ENCODE measurements at regions of chr10 and their contacts with region 1.

Region 1: DNA sequence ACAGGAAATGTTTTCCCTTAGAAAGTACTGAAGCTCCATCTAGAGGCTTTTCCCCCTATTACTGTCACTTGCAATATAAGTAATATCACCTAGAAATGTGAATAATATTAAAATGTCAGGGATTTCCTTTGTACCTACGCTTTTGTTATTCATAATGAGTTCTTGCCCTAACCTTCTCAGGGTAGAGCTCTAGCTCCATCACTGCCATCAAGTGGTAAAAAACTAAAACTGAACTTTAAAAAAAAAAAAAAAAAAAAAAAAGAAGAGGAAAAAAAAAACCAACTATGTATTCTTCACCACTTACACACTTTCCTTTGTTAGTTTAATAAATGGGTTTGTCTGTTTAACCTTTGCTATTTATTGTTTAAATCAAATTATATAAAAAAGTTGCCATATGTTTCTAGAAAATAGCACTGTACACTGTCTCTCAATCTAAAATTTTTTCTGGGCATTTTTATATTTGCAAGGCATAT is 49.9 kb downstream of the DNAJC1 start:
- DNase-seq: peak; percentile 64
- H3K4me3 ChIP-seq: no peak overlapping the region
- H3K27ac ChIP-seq: no peak overlapping the region
- H3K4me1 ChIP-seq: no peaks in the 10 kb centered on the region
- H3K27me3 ChIP-seq: no peaks in the 10 kb centered on the region
- CTCF ChIP-seq: peak; percentile 38 to 61

Region 2: DNA sequence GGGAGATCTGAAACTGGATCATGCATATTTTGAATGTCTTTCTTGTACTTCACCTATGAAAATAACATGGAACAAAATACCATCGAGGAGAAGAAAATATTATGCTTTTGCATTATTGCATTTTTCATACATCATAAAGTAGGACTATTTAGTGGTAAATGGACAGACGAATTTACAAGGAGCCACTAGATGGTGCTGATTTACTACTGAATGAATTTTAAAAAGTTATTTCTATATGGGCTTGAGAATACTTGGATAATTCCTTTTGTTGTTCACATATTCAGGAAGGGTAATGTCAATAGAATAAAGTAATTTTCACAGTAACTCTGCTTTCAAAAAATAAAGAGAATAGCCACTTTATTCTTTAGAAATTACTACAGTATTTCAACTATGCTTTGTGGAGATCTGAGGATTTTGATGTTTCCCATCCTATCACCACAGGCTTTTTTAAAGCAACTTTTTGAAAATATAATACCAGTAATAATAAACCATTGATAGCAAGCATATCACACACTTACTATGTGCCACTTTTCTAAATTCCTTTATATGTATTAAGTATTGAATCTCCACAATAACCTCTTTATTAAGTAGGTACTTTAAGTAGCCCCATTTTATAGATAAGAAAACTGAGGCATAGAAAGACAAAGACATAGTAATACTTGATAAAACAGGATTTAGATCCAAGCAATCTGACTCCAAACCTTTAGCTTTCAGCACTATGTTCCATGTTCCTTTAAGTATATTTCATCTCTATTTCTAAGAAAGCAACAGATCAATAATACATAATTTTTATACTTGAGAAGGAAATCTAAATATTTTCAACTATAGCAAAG is 1095.1 kb before region 1 on chr10:
- CTCF ChIA-PET with region 1: no interaction called
- dilution Hi-C with region 1: no loop called
- in situ Hi-C with region 1: no loop called
- intact Hi-C with region 1: loop called (anchors 10 kb)
- DNase-seq: peak; percentile 25
- H3K4me3 ChIP-seq: no peak overlapping the region
- H3K27ac ChIP-seq: no peak overlapping the region
- H3K4me1 ChIP-seq: no peaks in the 10 kb centered on the region
- H3K27me3 ChIP-seq: no peaks in the 10 kb centered on the region
- CTCF ChIP-seq: peak; percentile 38 to 54

Region 3: DNA sequence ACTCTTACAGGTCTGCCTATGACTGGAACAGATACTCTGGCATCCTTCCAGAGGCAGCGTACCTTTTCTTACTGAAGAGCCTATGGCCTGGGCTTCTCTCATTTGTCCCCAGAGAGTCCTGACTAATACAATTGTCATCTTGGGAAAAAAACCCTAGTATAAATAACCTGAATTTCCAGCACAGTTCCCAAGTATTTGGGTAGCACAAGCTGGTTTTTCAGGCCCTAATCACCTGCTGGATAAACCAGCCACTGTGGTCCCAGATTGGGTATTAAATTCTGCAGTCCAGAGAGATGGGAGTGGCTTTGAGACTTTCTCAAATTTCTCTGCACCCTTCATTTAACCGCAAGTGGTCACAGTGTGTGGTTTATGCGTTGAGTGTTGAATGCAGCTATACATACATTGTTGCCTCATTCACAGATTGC is 869.7 kb before region 1 on chr10:
- CTCF ChIA-PET with region 1: interaction called, 35 read pairs
- dilution Hi-C with region 1: no loop called
- in situ Hi-C with region 1: no loop called
- intact Hi-C with region 1: loop called (anchors 5 kb)
- DNase-seq: peak; percentile 82
- H3K4me3 ChIP-seq: no peak overlapping the region
- H3K27ac ChIP-seq: no peak overlapping the region
- H3K4me1 ChIP-seq: no peaks in the 10 kb centered on the region
- H3K27me3 ChIP-seq: no peaks in the 10 kb centered on the region
- CTCF ChIP-seq: no peak

Region 4: GRCh38 chr10:21516242-21517131 is 437.1 kb before region 1 on chr10:
- CTCF ChIA-PET with region 1: no interaction called
- dilution Hi-C with region 1: no loop called
- in situ Hi-C with region 1: loop called in 1 of 2 experiments (anchors 25 kb)
- intact Hi-C with region 1: loop called (anchors 5 kb)
- DNase-seq: peak; percentile 56
- H3K4me3 ChIP-seq: peak overlapping the region; percentile 44 to 68 (median 67)
- H3K27ac ChIP-seq: no peak overlapping the region
- H3K4me1 ChIP-seq: peaks cover 18% of the 10 kb centered on the region
- H3K27me3 ChIP-seq: no peaks in the 10 kb centered on the region
- CTCF ChIP-seq: no peak

Region 5: DNA sequence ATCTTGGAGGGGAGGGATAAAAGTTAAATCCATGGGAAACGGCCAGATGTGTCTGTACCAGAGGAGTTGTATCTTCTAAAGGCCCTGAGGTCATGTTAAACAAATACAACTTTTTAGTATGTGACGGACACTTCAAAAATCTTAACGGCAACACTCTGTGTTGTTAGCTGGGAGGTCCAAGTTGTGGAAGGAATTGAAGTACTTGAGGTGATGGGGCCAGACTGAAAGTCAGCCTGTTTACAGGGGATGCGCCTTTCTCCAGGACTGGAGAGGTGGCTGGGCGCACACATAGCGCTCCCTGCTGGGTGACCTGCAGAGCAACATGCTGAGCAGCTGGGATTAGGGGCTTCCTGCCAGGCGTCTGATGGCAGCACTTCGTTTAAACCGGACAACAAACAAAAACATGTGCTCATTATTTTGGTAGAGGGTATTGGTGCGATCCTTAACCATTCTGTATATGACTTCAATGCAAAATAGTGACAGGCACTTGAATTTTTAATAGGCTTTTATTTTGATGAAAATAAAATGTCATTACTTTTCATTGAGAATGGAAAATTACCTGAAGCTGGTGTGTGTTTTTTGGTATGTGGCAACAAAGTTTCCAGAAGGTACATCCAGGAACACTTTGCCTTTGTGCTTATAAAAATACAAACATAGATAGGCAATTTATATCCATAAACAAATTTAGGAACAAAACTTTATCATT is 221.4 kb before region 1 on chr10:
- CTCF ChIA-PET with region 1: no interaction called
- dilution Hi-C with region 1: no loop called
- in situ Hi-C with region 1: no loop called
- intact Hi-C with region 1: loop called (anchors 5 kb)
- DNase-seq: no peak
- H3K4me3 ChIP-seq: no peak overlapping the region
- H3K27ac ChIP-seq: no peak overlapping the region
- H3K4me1 ChIP-seq: peaks cover 6% of the 10 kb centered on the region
- H3K27me3 ChIP-seq: no peaks in the 10 kb centered on the region
- CTCF ChIP-seq: peak; percentile 55 to 57

Region 6: GRCh38 chr10:22294695-22295094 is 341.1 kb after region 1 on chr10:
- CTCF ChIA-PET with region 1: no interaction called
- dilution Hi-C with region 1: no loop called
- in situ Hi-C with region 1: no loop called
- intact Hi-C with region 1: no loop called
- DNase-seq: no peak
- H3K4me3 ChIP-seq: no peak overlapping the region
- H3K27ac ChIP-seq: no peak overlapping the region
- H3K4me1 ChIP-seq: no peaks in the 10 kb centered on the region
- H3K27me3 ChIP-seq: peaks cover 3% of the 10 kb centered on the region
- CTCF ChIP-seq: no peak